AG04449 (cell line): ENCODE measurements at regions of chr3 and their contacts with region 1.

Region 1: GRCh38 chr3:148991194-148992026 is at the start of gene GYG1:
- DNase-seq: no peak
- H3K4me3 ChIP-seq: peak within 1 kb of the TSS; percentile 71
- CTCF ChIP-seq: peak; percentile 40

Region 2: DNA sequence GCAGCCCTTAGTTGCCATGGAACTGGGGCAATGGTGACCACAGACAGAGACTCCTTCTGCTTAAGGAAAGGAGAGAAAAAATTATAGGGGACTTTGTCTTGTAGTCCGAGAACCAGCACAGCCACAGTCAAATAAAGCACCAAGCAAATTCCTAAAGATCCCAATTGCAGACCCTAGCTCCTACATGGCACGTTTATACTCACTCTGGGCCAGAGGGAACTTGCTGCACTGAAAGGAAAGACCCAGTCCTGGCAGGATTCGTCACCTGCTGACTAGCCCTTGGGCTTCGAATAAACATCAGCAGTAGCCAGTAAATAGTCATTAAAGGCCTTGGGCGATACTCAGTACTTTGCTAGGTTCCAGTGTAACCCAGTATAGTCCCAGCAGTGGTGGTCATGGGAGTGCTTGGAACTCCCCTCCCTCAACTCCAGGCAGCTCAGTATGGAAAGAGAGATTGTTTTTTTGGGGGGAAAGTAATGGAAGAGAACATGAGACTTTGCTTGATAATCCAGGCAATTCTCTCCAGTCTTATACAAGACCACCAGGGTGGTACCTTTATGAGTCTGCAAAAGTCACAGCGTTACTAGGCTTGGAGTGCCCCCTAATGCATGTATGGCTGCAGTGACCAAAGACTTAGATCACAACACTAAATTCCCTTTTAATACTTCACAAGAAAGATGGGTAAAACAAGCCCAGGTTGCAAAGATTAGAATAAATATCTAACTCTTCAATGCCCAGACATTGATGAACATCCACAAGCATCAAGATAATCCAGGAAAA is 360.1 kb before region 1 on chr3:
- CTCF ChIA-PET with region 1: no interaction called
- POLR2A ChIA-PET with region 1: no interaction called
- DNase-seq: no peak
- H3K4me3 ChIP-seq: no peak overlapping the region
- CTCF ChIP-seq: peak; percentile 20

Region 3: GRCh38 chr3:149003653-149004305 is 12.4 kb after region 1 on chr3:
- CTCF ChIA-PET with region 1: interaction called, 25 read pairs
- POLR2A ChIA-PET with region 1: interaction called, 7 read pairs
- DNase-seq: no peak
- H3K4me3 ChIP-seq: no peak overlapping the region
- CTCF ChIP-seq: no peak